HEK293 (cell line): ENCODE measurements at regions of chr19 and their contacts with region 1.

Region 1: GRCh38 chr19:5967994-5968430 is 9.9 kb downstream of the RANBP3 start:
- H3K4me3 ChIP-seq: no peak overlapping the region
- H3K27ac ChIP-seq: peak overlapping the region; percentile 52
- H3K4me1 ChIP-seq: peaks cover 9% of the 10 kb centered on the region
- CTCF ChIP-seq: peak; percentile 74; the same call in 1 of the 2 replicates

Region 2: DNA sequence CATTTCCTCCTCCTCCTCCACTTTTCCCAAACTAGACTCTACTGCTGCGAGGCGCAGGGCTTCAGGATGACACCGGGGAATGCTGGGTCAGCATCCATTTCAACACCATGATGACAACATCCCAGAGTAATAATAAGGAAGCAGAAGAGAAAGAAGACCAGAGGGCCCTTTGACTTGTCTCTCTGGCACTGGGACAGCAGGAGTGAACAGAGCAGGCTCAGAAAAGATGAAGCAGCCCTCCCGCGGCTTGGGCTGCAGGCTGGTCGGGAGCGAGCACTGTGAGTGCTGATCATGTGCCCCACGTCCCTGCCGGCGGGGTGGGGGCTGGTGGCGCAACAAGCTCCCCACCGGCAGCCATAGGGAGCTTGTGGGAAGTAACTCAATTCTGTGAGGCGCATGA is 20.6 kb before region 1 on chr19:
- CTCF ChIA-PET with region 1: interaction called, 60 read pairs
- POLR2A ChIA-PET with region 1: no interaction called
- H3K4me3 ChIP-seq: no peak overlapping the region
- H3K27ac ChIP-seq: no peak overlapping the region
- H3K4me1 ChIP-seq: peaks cover 7% of the 10 kb centered on the region
- CTCF ChIP-seq: no peak

Region 3: DNA sequence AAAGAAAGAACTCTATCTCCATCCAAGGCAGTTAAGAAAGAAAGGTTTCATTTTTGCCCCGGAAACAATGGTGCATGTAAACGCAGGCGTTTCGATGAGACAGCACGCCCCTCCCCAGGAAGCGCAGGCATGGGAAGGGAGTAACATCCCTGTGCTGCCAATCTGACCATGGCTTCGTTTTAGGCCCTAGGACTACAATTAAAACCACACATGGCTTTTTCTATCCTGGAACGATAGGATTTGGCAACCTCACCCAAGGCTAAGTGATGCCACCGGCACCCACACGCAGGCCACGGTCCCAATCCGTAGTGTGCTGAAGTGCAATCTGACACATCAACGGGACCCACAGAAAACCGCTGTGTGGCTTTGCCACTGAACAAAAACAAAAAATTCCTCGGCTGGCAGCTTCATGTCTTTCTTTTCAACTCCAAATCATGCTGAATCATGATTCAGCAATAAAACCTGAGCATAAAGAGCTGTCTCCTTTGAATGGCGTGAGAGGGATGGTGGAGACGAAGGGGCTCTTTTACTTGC is 14.3 kb before region 1 on chr19:
- CTCF ChIA-PET with region 1: interaction called, 60 read pairs
- POLR2A ChIA-PET with region 1: no interaction called
- H3K4me3 ChIP-seq: no peak overlapping the region
- H3K27ac ChIP-seq: no peak overlapping the region
- H3K4me1 ChIP-seq: peaks cover 46% of the 10 kb centered on the region
- CTCF ChIP-seq: no peak